CD8-positive, alpha-beta T cell (primary cell): ENCODE measurements at regions of chr6 and their contacts with region 1.

Region 1: DNA sequence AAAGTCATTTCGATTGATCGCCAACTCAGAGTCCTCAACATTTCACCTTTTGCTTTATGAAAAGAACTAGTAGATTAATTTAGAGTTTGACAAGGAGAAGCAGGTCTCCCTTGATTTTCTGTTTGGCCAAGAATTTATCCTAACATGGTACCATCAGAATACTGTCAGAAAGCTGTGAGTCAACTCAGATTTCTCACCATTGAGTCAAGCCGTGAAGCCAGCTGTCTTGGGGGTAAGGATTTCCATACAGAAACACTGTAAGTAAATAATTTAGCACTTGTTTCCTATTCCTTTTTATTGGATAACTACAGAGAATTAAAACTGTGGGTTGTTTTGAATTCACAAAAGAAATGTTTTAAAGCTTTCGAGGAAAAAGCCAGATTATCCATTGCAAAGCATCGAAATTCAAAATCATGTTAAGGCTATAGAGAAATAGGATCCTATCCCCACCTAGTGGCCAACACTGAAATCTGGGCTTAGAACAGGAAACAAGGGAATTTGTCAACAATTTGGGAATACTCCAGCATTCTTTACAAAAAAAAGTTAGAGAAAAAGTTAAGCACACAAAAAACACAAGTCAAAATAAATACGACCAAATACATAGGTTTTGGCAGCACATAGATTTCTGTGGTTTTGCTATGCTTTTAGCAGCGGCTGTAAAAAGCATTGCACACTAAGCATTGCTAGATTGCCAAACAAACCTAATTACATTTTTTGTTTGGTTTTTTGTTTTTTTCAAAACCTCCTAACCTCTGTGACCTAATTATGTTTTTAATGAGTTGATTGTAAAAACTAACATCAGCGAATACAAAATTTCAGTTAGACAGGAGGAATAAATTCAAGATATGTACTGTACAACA is 44.2 kb downstream of the COL11A2 start:
- DNase-seq: peak in 2 of 9 experiments; percentile 42 to 52
- ATAC-seq: no peak
- H3K4me3 ChIP-seq: no peak overlapping the region
- H3K4me3 Mint-ChIP-seq: no peak overlapping the region
- H3K27ac ChIP-seq: no peak overlapping the region
- H3K27ac Mint-ChIP-seq: no peak overlapping the region
- H3K4me1 ChIP-seq: no peaks in the 10 kb centered on the region
- H3K4me1 Mint-ChIP-seq: peaks cover 2% of the 10 kb centered on the region
- H3K27me3 ChIP-seq: no peaks in the 10 kb centered on the region
- H3K27me3 Mint-ChIP-seq: peaks cover 18% of the 10 kb centered on the region
- CTCF ChIP-seq: peak; percentile 71

Region 2: GRCh38 chr6:32885698-32886286 is 262.2 kb before region 1 on chr6:
- CTCF ChIA-PET with region 1: no interaction called
- POLR2A ChIA-PET with region 1: no interaction called
- intact Hi-C with region 1: no loop called
- DNase-seq: peak in 2 of 9 experiments; percentile 78 to 85
- ATAC-seq: peak; percentile 71
- H3K4me3 ChIP-seq: no peak overlapping the region
- H3K4me3 Mint-ChIP-seq: no peak overlapping the region
- H3K27ac ChIP-seq: no peak overlapping the region
- H3K27ac Mint-ChIP-seq: no peak overlapping the region
- H3K4me1 ChIP-seq: no peaks in the 10 kb centered on the region
- H3K4me1 Mint-ChIP-seq: no peaks in the 10 kb centered on the region
- H3K27me3 ChIP-seq: no peaks in the 10 kb centered on the region
- H3K27me3 Mint-ChIP-seq: no peaks in the 10 kb centered on the region
- CTCF ChIP-seq: peak; percentile 77

Region 3: GRCh38 chr6:33118525-33119123 is 29.4 kb before region 1 on chr6:
- CTCF ChIA-PET with region 1: interaction called, 16 read pairs
- POLR2A ChIA-PET with region 1: no interaction called
- intact Hi-C with region 1: loop called in 1 of 2 experiments (anchors 1 kb)
- DNase-seq: peak in 3 of 9 experiments; percentile 30 to 83 (median 76)
- ATAC-seq: peak; percentile 84
- H3K4me3 ChIP-seq: no peak overlapping the region
- H3K4me3 Mint-ChIP-seq: no peak overlapping the region
- H3K27ac ChIP-seq: no peak overlapping the region
- H3K27ac Mint-ChIP-seq: no peak overlapping the region
- H3K4me1 ChIP-seq: no peaks in the 10 kb centered on the region
- H3K4me1 Mint-ChIP-seq: peaks cover 18% of the 10 kb centered on the region
- H3K27me3 ChIP-seq: peaks cover 20 to 22% of the 10 kb centered on the region in 2 experiments
- H3K27me3 Mint-ChIP-seq: peaks cover 46% of the 10 kb centered on the region
- CTCF ChIP-seq: peak; percentile 65

Region 4: GRCh38 chr6:33183071-33183683 is 35.1 kb after region 1 on chr6:
- CTCF ChIA-PET with region 1: no interaction called
- POLR2A ChIA-PET with region 1: no interaction called
- intact Hi-C with region 1: no loop called
- DNase-seq: peak in 2 of 9 experiments; percentile 34 to 53
- ATAC-seq: no peak
- H3K4me3 ChIP-seq: peak overlapping the region in 1 of 2 experiments; percentile 6
- H3K4me3 Mint-ChIP-seq: peak overlapping the region; percentile 52
- H3K27ac ChIP-seq: peak overlapping the region in 1 of 2 experiments; percentile 62
- H3K27ac Mint-ChIP-seq: peak overlapping the region; percentile 90
- H3K4me1 ChIP-seq: peaks cover 19% of the 10 kb centered on the region
- H3K4me1 Mint-ChIP-seq: peaks cover 23% of the 10 kb centered on the region
- H3K27me3 ChIP-seq: peaks cover 0 to 16% of the 10 kb centered on the region in 2 experiments
- H3K27me3 Mint-ChIP-seq: peaks cover 12% of the 10 kb centered on the region
- CTCF ChIP-seq: no peak